WTC11 (cell line): ENCODE measurements at regions of chr6 and their contacts with region 1.

Region 1: DNA sequence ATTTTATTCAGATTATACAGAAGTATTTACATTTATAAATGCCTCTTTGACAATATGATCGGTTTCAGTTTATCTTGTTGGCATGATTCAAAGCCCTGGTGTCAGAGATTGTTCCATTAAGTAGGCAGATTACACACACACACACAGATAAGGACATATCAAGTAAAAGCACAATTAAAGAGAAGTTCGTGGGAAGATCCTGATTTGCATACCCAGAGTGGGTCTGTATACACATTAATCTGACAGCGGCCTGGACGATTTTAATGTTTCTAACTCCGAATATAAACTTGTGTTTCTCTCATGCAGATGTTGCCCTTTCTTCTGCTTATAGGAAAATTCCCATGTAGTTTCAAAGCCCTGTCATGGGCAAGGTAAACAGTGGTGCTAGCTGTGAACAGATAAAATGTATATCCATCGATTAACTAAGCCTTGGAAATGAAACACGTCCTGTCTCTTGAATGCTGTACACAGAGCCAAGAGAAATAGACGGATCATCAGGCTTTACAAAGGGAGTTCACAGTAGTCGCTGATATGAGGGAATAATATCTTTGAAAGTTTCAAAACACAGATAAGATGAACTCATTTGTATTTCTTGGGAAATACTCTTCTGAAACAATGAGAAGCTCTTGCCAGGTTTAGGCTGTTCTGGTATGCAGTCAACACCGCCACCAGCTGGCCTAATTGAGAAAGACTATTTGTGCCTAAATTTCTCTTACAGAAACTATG is 108.2 kb upstream of the GMDS start:
- DNase-seq: peak; percentile 71
- ATAC-seq: peak; percentile 73
- H3K4me3 Mint-ChIP-seq: no peak overlapping the region
- H3K27ac Mint-ChIP-seq: no peak overlapping the region
- H3K4me1 Mint-ChIP-seq: peaks cover 7% of the 10 kb centered on the region
- H3K27me3 Mint-ChIP-seq: no peaks in the 10 kb centered on the region
- CTCF ChIP-seq: no peak; the same call in 1 of the 2 replicates

Region 2: GRCh38 chr6:2175825-2176224 is 177.8 kb before region 1 on chr6:
- CTCF ChIA-PET with region 1: interaction called, 10 read pairs
- POLR2A ChIA-PET with region 1: no interaction called
- DNase-seq: no peak
- ATAC-seq: no peak
- H3K4me3 Mint-ChIP-seq: no peak overlapping the region
- H3K27ac Mint-ChIP-seq: no peak overlapping the region
- H3K4me1 Mint-ChIP-seq: peaks cover 13% of the 10 kb centered on the region
- H3K27me3 Mint-ChIP-seq: no peaks in the 10 kb centered on the region; the same call in 1 of the 2 replicates
- CTCF ChIP-seq: no peak